Activated CD4-positive, alpha-beta T cell treated with anti-CD3 and anti-CD28 coated beads for 36 hours (primary cell): ENCODE measurements at regions of chr17 and their contacts with region 1.

Region 1: GRCh38 chr17:4986951-4987766 is at the start of gene CAMTA2:
- DNase-seq: peak; percentile 91
- ATAC-seq: peak; percentile 87
- H3K4me3 Mint-ChIP-seq: peak within 1 kb of the TSS; percentile 93
- H3K27ac Mint-ChIP-seq: peak within 1 kb of the TSS; percentile 91
- H3K4me1 Mint-ChIP-seq: peaks cover 33% of the 10 kb centered on the region
- H3K27me3 Mint-ChIP-seq: no peaks in the 10 kb centered on the region
- total RNA-seq, gene CAMTA2: 98.2 to 124 TPM

Region 2: GRCh38 chr17:4881761-4882555 is 105.2 kb before region 1 on chr17:
- CTCF ChIA-PET with region 1: no interaction called
- POLR2A ChIA-PET with region 1: no interaction called
- intact Hi-C with region 1: no loop called
- DNase-seq: peak; percentile 84
- ATAC-seq: peak; percentile 94
- H3K4me3 Mint-ChIP-seq: no peak overlapping the region
- H3K27ac Mint-ChIP-seq: no peak overlapping the region
- H3K4me1 Mint-ChIP-seq: no peaks in the 10 kb centered on the region
- H3K27me3 Mint-ChIP-seq: no peaks in the 10 kb centered on the region

Region 3: GRCh38 chr17:5078106-5079028 is 91.2 kb after region 1 on chr17 and contains the start of gene ZFP3:
- CTCF ChIA-PET with region 1: interaction called, 3 read pairs
- POLR2A ChIA-PET with region 1: interaction called, 10 read pairs
- intact Hi-C with region 1: no loop called
- DNase-seq: peak; percentile 89
- ATAC-seq: peak; percentile 90
- H3K4me3 Mint-ChIP-seq: peak within 1 kb of the TSS; percentile 73
- H3K27ac Mint-ChIP-seq: peak within 1 kb of the TSS; percentile 95
- H3K4me1 Mint-ChIP-seq: peaks cover 30% of the 10 kb centered on the region
- H3K27me3 Mint-ChIP-seq: no peaks in the 10 kb centered on the region
- total RNA-seq, gene ZFP3: 2.2 to 2.8 TPM